ENCODE measurements at regions of chr17 and their contacts with region 1.

Region 1: DNA sequence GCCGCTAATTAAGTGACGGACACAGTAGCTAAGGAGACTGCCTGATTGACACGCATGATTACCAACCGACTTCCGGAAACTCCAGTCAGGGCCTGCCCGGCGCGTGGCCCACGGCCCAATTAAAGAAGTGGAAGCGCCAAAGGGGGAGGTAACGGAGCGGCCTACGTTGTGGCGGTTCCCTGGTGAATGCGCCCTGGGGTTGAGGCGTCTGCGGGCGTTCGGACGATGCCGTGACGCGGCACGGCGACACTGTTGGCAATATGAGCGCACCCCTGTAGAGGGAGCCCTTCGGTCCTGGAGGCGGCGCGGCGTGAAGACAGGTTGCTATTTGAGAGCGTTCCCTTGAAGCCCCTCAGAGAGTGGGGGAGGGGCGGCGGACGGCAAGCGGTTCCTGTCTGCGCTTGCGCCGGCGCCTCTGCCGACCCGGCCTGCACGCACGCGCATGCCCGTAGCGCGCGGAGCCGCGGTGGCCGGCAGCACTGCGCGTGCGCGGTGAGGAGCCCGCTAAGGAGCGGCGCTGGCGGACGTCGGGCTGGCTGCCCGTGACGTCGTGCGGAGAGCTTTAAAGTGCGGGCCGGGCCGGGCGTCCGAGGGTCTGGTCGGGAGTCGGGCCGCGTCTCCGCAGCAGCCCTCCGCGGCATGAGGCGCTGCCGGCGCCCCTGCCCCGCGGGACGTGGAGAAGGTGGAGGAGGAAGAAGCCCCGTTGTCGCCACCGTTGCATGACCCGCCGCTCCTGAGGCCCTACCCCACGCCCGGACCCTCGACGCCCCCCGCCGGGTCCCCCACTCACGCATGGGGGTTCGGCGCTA is at the start of gene ALKBH5:
- DNase-seq: peak; percentile 93 to 99 (median 98)
- ATAC-seq: peak; percentile 77
- H3K4me3 ChIP-seq: peak within 1 kb of the TSS; percentile 58 to 81
- H3K4me3 Mint-ChIP-seq: peak within 1 kb of the TSS; percentile 95
- H3K27ac ChIP-seq: peak within 1 kb of the TSS; percentile 92 to 95
- H3K27ac Mint-ChIP-seq: peak within 1 kb of the TSS; percentile 97
- H3K4me1 ChIP-seq: peaks cover 42% of the 10 kb centered on the region
- H3K4me1 Mint-ChIP-seq: peaks cover 47% of the 10 kb centered on the region
- H3K27me3 ChIP-seq: no peaks in the 10 kb centered on the region
- H3K27me3 Mint-ChIP-seq: no peaks in the 10 kb centered on the region
- CTCF ChIP-seq: peak; percentile 73
- total RNA-seq, gene ALKBH5: 138 to 141 TPM

Region 2: GRCh38 chr17:17836250-17836817 is 347.2 kb before region 1 on chr17:
- CTCF ChIA-PET with region 1: no interaction called
- POLR2A ChIA-PET with region 1: no interaction called
- intact Hi-C with region 1: loop called in 1 of 2 experiments (anchors 10 kb)
- DNase-seq: peak; percentile 94 to 99 (median 97)
- ATAC-seq: peak; percentile 72
- H3K4me3 ChIP-seq: peak overlapping the region; percentile 87 to 95
- H3K4me3 Mint-ChIP-seq: peak overlapping the region; percentile 88
- H3K27ac ChIP-seq: peak overlapping the region; percentile 99
- H3K27ac Mint-ChIP-seq: peak overlapping the region; percentile 97
- H3K4me1 ChIP-seq: peaks cover 82% of the 10 kb centered on the region
- H3K4me1 Mint-ChIP-seq: peaks cover 75% of the 10 kb centered on the region
- H3K27me3 ChIP-seq: no peaks in the 10 kb centered on the region
- H3K27me3 Mint-ChIP-seq: no peaks in the 10 kb centered on the region
- CTCF ChIP-seq: no peak

Region 3: DNA sequence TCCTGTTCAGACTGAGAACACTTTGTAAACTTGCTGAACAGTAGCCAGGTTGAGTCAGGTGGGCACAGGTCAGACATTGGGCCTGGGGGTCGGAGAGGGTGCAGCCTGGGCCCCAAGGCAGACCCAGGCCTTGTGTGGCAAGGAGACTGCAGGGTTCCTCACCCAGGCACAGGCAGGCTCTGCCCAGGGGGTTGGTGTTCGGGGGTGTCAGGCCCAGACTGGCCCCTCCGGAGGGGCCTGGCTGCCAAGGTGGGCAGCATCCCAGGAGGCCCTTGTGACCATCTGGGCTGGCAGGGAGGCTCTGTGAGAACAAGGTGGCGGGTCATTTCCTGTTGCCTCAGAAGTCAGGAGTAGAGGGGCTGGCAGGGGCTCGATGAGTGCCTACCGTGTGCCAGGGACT is 75.6 kb before region 1 on chr17:
- CTCF ChIA-PET with region 1: no interaction called
- POLR2A ChIA-PET with region 1: no interaction called
- intact Hi-C with region 1: no loop called
- DNase-seq: no peak
- ATAC-seq: no peak
- H3K4me3 ChIP-seq: no peak overlapping the region
- H3K4me3 Mint-ChIP-seq: no peak overlapping the region
- H3K27ac ChIP-seq: no peak overlapping the region
- H3K27ac Mint-ChIP-seq: no peak overlapping the region
- H3K4me1 ChIP-seq: no peaks in the 10 kb centered on the region
- H3K4me1 Mint-ChIP-seq: peaks cover 2% of the 10 kb centered on the region
- H3K27me3 ChIP-seq: no peaks in the 10 kb centered on the region
- H3K27me3 Mint-ChIP-seq: no peaks in the 10 kb centered on the region
- CTCF ChIP-seq: no peak

Region 4: GRCh38 chr17:18141210-18141803 is 42.2 kb before region 1 on chr17:
- CTCF ChIA-PET with region 1: interaction called, 3 read pairs
- POLR2A ChIA-PET with region 1: interaction called, 3 read pairs
- intact Hi-C with region 1: loop called (anchors 1 to 2 kb)
- DNase-seq: peak in 7 of 9 experiments; percentile 13 to 77 (median 44)
- ATAC-seq: peak; percentile 89
- H3K4me3 ChIP-seq: no peak overlapping the region
- H3K4me3 Mint-ChIP-seq: no peak overlapping the region
- H3K27ac ChIP-seq: no peak overlapping the region
- H3K27ac Mint-ChIP-seq: no peak overlapping the region
- H3K4me1 ChIP-seq: peaks cover 9% of the 10 kb centered on the region
- H3K4me1 Mint-ChIP-seq: peaks cover 4% of the 10 kb centered on the region
- H3K27me3 ChIP-seq: no peaks in the 10 kb centered on the region
- H3K27me3 Mint-ChIP-seq: peaks cover 2% of the 10 kb centered on the region
- CTCF ChIP-seq: peak; percentile 73

Region 5: DNA sequence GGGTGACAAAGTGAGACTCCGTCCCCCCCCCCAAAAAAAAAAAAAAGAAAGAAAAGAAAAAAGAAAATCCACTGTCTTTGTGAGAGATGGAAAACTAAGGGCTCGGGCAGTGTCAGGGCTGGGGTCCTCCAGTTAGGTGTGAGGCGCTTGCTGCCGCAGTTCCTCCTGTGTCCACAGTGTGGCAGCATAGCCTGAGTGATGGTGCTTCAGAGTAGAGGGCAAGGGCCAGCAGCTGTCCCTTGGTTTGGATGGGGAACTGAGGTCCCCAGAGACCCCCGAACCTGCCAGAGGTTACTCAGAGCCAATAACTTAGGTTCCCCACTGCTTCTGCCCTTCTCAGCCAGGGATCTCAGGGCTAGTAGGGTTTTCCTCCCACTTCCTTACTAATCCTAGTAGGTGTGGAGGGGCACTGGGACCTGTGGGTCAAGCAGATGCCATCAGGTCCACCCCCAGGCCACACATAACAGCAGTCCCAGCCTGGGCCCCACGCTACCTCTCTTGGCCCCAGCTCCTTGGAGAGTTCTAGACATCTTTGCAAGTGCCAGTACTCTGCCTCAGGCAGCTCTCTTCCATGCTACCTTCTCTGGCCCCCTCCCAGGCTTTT is 34.0 kb after region 1 on chr17:
- CTCF ChIA-PET with region 1: interaction called, 10 read pairs
- POLR2A ChIA-PET with region 1: no interaction called
- intact Hi-C with region 1: no loop called
- DNase-seq: peak; percentile 55 to 79 (median 75)
- ATAC-seq: peak; percentile 98
- H3K4me3 ChIP-seq: no peak overlapping the region
- H3K4me3 Mint-ChIP-seq: no peak overlapping the region
- H3K27ac ChIP-seq: no peak overlapping the region
- H3K27ac Mint-ChIP-seq: no peak overlapping the region
- H3K4me1 ChIP-seq: no peaks in the 10 kb centered on the region
- H3K4me1 Mint-ChIP-seq: peaks cover 1% of the 10 kb centered on the region
- H3K27me3 ChIP-seq: no peaks in the 10 kb centered on the region
- H3K27me3 Mint-ChIP-seq: no peaks in the 10 kb centered on the region
- CTCF ChIP-seq: peak; percentile 74

Region 6: GRCh38 chr17:18314731-18315561 is 131.4 kb after region 1 on chr17 and contains the starts of genes SMCR8 and TOP3A:
- CTCF ChIA-PET with region 1: no interaction called
- POLR2A ChIA-PET with region 1: no interaction called
- intact Hi-C with region 1: loop called in 1 of 2 experiments (anchors 1 kb)
- DNase-seq: peak; percentile 95 to 99 (median 97)
- ATAC-seq: peak; percentile 95
- H3K4me3 ChIP-seq: peak within 1 kb of the TSS; percentile 88 to 93
- H3K4me3 Mint-ChIP-seq: peak within 1 kb of the TSS; percentile 90
- H3K27ac ChIP-seq: peak within 1 kb of the TSS; percentile 98 to 99
- H3K27ac Mint-ChIP-seq: peak within 1 kb of the TSS; percentile 97
- H3K4me1 ChIP-seq: peaks cover 67% of the 10 kb centered on the region
- H3K4me1 Mint-ChIP-seq: peaks cover 76% of the 10 kb centered on the region
- H3K27me3 ChIP-seq: no peaks in the 10 kb centered on the region
- H3K27me3 Mint-ChIP-seq: no peaks in the 10 kb centered on the region
- CTCF ChIP-seq: no peak
- total RNA-seq, gene SMCR8: 51.9 to 53.1 TPM
- total RNA-seq, gene TOP3A: 28.8 to 30.9 TPM

Measured in CD8-positive, alpha-beta T cell (primary cell).